KBM-7 (cell line): ENCODE measurements at regions of chr16 and their contacts with region 1.

Region 1: DNA sequence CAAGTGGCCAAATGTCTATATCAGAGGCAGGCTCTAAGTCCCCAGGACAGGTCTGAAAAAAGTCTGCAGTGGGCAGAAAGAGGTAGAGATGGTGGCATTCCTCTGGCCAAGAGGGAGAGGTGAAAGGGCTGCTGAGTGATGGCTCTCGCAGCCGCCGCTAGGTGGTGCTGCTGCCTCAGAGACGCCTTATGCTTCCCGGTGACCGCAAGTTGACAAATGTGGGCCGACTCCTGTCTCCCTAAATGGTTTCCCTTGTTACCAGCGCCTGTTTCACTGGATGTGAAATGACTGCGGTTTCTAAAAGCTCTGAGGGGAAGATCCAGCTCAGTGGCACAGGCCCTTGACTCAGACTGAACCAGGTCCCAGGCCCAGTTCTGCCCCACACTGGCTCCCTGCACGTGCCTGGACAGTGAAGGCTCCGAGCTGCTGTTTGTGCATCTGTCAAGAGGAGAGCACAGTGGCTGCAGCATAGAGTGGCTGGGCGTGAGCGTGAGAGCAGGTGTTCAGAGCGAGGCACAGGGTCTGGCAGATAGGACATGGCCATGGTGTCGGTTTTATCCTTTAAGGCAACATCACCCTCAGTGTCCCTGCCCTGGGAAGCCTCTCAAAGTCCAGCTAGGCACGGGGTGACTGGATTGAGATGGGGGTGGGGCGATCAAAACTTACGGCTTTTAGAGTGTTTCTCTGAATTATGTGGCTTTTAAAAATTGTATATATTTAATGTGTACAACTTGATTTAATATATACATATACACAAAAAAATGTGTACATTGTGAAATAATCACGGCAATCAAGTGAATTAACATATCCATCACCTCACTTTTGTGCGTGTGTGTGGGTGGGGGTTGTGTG is 19.9 kb downstream of the CLEC16A start:
- DNase-seq: peak; percentile 89

Region 2: DNA sequence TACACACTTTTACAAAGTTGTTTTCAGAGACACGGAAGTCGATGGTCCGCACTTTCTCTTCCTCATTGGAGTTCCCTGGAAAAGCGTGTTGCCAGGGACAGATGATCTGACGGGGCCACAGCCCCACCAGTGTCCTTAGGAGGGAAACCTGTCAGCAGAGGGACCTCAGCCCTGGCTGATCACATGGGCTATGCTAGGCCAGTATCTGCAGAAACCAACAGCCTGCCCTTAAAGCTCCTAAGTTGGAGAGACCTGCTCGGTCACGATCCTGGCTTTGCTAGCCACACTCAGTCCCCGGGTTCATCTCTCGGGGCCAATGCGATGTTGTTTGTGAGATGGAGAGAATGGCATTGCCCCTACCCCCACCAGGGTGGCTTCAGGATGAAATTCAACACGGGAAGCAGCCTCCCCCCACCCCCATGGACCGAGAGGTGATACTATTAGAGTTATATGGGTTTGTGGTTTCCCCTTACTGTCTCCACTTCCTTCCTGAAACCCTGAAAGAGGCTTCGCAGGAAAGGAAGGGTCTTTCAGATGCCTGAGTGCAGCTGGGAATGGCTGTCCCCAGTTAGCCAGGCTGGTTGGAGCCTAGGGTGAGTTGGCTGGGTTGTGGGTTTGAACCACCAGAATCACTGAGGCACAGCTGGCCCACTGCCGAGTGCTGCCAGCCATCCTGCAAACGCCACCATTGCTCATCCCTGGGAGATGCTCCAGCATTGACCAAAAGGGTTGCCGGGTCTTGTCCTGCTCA is 397.6 kb after region 1 on chr16:
- in situ Hi-C with region 1: loop called (anchors 10 kb)
- DNase-seq: peak; percentile 84

Region 3: DNA sequence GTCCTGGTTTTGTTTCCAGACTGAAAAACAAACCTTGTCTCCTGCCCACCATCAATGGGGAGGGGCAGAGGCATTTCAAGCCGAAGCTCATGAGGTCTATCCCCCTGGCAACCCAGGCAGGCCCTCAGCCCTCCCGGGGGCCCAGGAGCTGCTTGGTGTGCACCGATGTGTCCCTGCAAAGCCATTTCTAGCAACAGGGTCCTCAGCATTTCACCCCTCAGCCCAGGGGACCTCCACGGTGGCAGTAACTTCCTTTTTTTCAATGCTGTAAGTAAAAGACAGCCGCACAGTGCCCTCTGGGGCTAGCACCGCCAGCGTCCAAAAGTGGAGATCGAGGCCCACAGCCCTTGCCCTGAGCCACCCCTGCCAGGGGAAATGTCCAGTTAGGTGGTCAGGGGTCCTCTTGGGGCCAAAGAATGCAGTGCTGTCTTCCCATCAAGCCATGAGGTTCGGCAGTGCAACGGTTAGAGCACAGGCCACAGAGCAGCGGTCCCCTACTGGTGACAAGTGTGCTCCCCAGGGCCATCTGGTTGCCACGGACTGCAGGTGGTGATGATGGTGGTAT is 542.6 kb after region 1 on chr16:
- in situ Hi-C with region 1: loop called (anchors 25 kb)
- DNase-seq: peak; percentile 83

Region 4: GRCh38 chr16:11689031-11689761 is 724.9 kb after region 1 on chr16:
- in situ Hi-C with region 1: loop called (anchors 25 kb)
- DNase-seq: no peak